ENCODE measurements at regions of chr1 and their contacts with region 1.

Region 1: DNA sequence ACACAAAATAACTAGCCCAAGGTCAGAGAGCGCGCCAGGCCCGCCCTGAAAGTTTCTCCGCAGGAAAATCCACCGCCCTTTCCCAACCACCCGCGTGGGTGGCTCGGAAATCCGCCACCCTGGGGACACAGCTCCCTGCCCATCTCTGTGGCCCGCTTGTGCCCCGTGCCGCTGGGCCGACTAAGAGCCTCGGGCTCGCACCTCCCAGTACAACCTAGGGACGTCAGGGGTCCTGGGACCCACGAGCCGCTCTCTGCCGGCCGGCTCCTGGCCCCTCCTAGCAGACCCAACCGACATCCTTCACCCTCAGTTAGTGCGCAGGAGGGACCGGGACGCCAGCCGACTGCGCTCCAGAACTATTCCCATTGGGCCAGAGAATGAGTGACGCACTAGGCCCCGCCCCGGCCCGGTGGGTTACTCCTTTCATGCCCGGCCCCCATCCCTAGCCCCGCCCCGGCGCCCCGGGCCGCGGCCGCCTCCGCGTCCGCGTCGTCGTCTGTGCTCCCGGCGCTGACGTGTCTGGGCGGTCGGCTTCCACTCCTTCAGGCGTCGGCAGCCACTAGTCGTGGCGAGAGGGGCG is 395 bp upstream of the UAP1 start:
- DNase-seq: peak; percentile 96 to 99 (median 98)
- ATAC-seq: peak; percentile 94
- H3K4me3 ChIP-seq: peak overlapping the region; percentile 84 to 93
- H3K4me3 Mint-ChIP-seq: peak overlapping the region; percentile 94
- H3K27ac ChIP-seq: peak overlapping the region; percentile 96
- H3K27ac Mint-ChIP-seq: peak overlapping the region; percentile 99
- H3K4me1 ChIP-seq: peaks cover 13% of the 10 kb centered on the region
- H3K4me1 Mint-ChIP-seq: peaks cover 35% of the 10 kb centered on the region
- H3K27me3 ChIP-seq: no peaks in the 10 kb centered on the region
- H3K27me3 Mint-ChIP-seq: no peaks in the 10 kb centered on the region
- CTCF ChIP-seq: no peak

Region 2: GRCh38 chr1:161314201-161314981 is 1246.7 kb before region 1 on chr1 and contains the start of gene SDHC:
- CTCF ChIA-PET with region 1: no interaction called
- POLR2A ChIA-PET with region 1: no interaction called
- intact Hi-C with region 1: loop called in 1 of 2 experiments (anchors 5 kb)
- DNase-seq: peak; percentile 79 to 95 (median 92)
- ATAC-seq: peak; percentile 95
- H3K4me3 ChIP-seq: peak within 1 kb of the TSS; percentile 63 to 90
- H3K4me3 Mint-ChIP-seq: peak within 1 kb of the TSS; percentile 97
- H3K27ac ChIP-seq: peak within 1 kb of the TSS; percentile 88 to 98
- H3K27ac Mint-ChIP-seq: peak within 1 kb of the TSS; percentile 99
- H3K4me1 ChIP-seq: peaks cover 14% of the 10 kb centered on the region
- H3K4me1 Mint-ChIP-seq: peaks cover 25% of the 10 kb centered on the region
- H3K27me3 ChIP-seq: no peaks in the 10 kb centered on the region
- H3K27me3 Mint-ChIP-seq: no peaks in the 10 kb centered on the region
- CTCF ChIP-seq: peak; percentile 38
- total RNA-seq, gene SDHC: 41.5 to 41.9 TPM

Region 3: GRCh38 chr1:162497723-162498500 is 63.2 kb before region 1 on chr1 and contains the start of gene UHMK1:
- CTCF ChIA-PET with region 1: no interaction called
- POLR2A ChIA-PET with region 1: no interaction called
- intact Hi-C with region 1: loop called (anchors 1 kb)
- DNase-seq: peak; percentile 79 to 95 (median 88)
- ATAC-seq: peak; percentile 97
- H3K4me3 ChIP-seq: peak within 1 kb of the TSS; percentile 73 to 92
- H3K4me3 Mint-ChIP-seq: peak within 1 kb of the TSS; percentile 89
- H3K27ac ChIP-seq: peak within 1 kb of the TSS; percentile 84 to 93
- H3K27ac Mint-ChIP-seq: peak within 1 kb of the TSS; percentile 96
- H3K4me1 ChIP-seq: peaks cover 35% of the 10 kb centered on the region
- H3K4me1 Mint-ChIP-seq: peaks cover 43% of the 10 kb centered on the region
- H3K27me3 ChIP-seq: no peaks in the 10 kb centered on the region
- H3K27me3 Mint-ChIP-seq: no peaks in the 10 kb centered on the region
- CTCF ChIP-seq: no peak
- total RNA-seq, gene UHMK1: 50.5 to 50.9 TPM

Region 4: GRCh38 chr1:162782671-162783070 is 221.5 kb after region 1 on chr1:
- CTCF ChIA-PET with region 1: no interaction called
- POLR2A ChIA-PET with region 1: no interaction called
- intact Hi-C with region 1: loop called in 1 of 2 experiments (anchors 5 kb)
- DNase-seq: no peak
- ATAC-seq: no peak
- H3K4me3 ChIP-seq: no peak overlapping the region
- H3K4me3 Mint-ChIP-seq: no peak overlapping the region
- H3K27ac ChIP-seq: no peak overlapping the region
- H3K27ac Mint-ChIP-seq: no peak overlapping the region
- H3K4me1 ChIP-seq: no peaks in the 10 kb centered on the region
- H3K4me1 Mint-ChIP-seq: no peaks in the 10 kb centered on the region
- H3K27me3 ChIP-seq: no peaks in the 10 kb centered on the region
- H3K27me3 Mint-ChIP-seq: peaks cover 14% of the 10 kb centered on the region
- CTCF ChIP-seq: no peak

Region 5: DNA sequence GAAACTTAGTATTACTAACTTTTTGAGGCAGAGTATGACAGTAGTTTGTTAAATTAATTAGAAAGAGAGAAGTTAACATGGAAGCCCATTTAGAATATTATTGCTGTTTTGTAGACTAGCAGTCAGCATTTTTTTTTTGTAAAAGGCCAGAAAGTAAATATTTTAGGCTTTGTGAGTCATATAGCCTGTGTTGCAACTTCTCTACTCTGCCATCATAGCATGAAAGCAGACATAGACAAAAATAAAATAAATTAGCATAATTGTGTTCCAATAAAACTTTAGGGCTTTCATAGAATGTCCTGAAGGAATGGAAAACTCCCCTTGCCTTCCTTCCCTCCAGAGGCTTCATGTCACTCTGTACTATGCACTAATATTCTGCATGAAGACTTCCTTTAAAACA is 495.7 kb after region 1 on chr1:
- CTCF ChIA-PET with region 1: no interaction called
- POLR2A ChIA-PET with region 1: no interaction called
- intact Hi-C with region 1: no loop called
- DNase-seq: no peak
- ATAC-seq: no peak
- H3K4me3 ChIP-seq: no peak overlapping the region
- H3K4me3 Mint-ChIP-seq: no peak overlapping the region
- H3K27ac ChIP-seq: no peak overlapping the region
- H3K27ac Mint-ChIP-seq: no peak overlapping the region
- H3K4me1 ChIP-seq: no peaks in the 10 kb centered on the region
- H3K4me1 Mint-ChIP-seq: no peaks in the 10 kb centered on the region
- H3K27me3 ChIP-seq: no peaks in the 10 kb centered on the region
- H3K27me3 Mint-ChIP-seq: peaks cover 7% of the 10 kb centered on the region
- CTCF ChIP-seq: no peak

Region 6: DNA sequence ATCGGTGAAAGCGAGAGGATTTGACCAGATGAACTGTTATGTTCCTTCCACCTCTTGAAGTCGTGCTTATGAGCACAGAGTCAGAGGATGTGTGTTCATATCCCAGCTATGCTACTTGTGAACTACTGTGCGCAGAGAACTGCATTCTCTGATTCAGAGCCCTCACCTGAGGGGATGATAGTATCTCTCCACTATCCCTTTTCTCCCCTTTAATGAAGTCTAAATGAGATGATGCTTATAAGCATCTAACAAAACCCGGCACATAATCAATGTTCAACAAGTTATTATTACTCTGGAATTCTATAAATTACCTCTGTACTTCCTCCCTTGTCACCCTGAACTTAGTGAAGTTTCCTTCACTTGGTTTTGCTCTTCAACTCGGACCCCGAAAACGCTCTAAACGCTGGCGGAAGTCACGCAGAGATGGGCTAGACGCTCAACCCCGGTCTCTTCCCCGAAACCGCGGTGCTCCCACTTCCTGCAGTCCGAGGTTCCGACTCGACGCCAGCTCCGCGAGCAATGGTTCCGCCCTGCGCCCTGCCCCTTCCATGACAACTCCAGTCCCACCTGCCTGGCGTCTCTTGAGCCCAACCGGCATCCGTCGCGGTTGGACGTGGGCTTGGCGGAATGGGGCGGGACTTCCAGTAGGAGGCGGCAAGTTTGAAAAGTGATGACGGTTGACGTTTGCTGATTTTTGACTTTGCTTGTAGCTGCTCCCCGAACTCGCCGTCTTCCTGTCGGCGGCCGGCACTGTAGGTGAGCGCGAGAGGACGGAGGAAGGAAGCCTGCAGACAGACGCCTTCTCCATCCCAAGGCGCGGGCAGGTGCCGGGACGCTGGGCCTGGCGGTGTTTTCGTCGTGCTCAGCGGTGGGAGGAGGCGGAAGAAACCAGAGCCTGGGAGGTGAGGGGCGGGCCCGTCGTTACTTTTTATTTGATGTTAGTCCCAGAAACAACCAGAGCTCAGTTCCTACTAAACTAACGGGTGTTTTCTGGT is 760.5 kb after region 1 on chr1 and contains the start of gene NUF2:
- CTCF ChIA-PET with region 1: no interaction called
- POLR2A ChIA-PET with region 1: no interaction called
- intact Hi-C with region 1: loop called (anchors 1 kb)
- DNase-seq: peak; percentile 94 to 98 (median 96)
- ATAC-seq: peak; percentile 97
- H3K4me3 ChIP-seq: peak within 1 kb of the TSS; percentile 58 to 80
- H3K4me3 Mint-ChIP-seq: peak within 1 kb of the TSS; percentile 96
- H3K27ac ChIP-seq: peak within 1 kb of the TSS; percentile 49 to 81
- H3K27ac Mint-ChIP-seq: peak within 1 kb of the TSS; percentile 98
- H3K4me1 ChIP-seq: peaks cover 16% of the 10 kb centered on the region
- H3K4me1 Mint-ChIP-seq: peaks cover 24% of the 10 kb centered on the region
- H3K27me3 ChIP-seq: no peaks in the 10 kb centered on the region
- H3K27me3 Mint-ChIP-seq: no peaks in the 10 kb centered on the region
- CTCF ChIP-seq: no peak
- total RNA-seq, gene NUF2: 1.2 to 2.5 TPM

Measured in CD8-positive, alpha-beta T cell (primary cell).